ENCODE measurements at regions of chr20 and their contacts with region 1.

Region 1: GRCh38 chr20:32406701-32407100 is 48.6 kb downstream of the ASXL1 start:
- DNase-seq: no peak
- H3K4me3 Mint-ChIP-seq: no peak overlapping the region
- H3K27ac Mint-ChIP-seq: no peak overlapping the region
- H3K4me1 Mint-ChIP-seq: peaks cover 35% of the 10 kb centered on the region
- H3K27me3 Mint-ChIP-seq: no peaks in the 10 kb centered on the region

Region 2: DNA sequence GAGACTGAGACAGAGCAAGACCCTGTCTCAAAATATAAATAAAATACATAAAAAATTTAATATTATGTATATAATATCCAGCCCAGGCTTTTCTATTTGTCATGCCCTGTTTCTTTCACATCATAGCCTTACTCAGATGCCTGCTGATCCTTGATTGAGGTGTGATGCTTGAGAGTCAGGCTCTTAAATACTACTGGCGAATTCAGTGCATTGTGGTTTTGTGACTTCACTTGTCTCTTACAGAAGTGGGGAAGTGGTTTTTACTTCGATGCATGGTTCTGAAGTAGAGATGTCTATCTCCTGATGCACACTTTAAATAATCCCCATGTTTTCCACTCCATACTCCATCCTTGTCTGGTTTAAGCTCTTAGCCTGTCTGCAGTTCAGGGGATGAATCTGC is 19.4 kb before region 1 on chr20:
- intact Hi-C with region 1: loop called (anchors 2 kb)
- DNase-seq: peak; percentile 55
- H3K4me3 Mint-ChIP-seq: no peak overlapping the region
- H3K27ac Mint-ChIP-seq: peak overlapping the region; percentile 59
- H3K4me1 Mint-ChIP-seq: peaks cover 68% of the 10 kb centered on the region
- H3K27me3 Mint-ChIP-seq: no peaks in the 10 kb centered on the region

Region 3: DNA sequence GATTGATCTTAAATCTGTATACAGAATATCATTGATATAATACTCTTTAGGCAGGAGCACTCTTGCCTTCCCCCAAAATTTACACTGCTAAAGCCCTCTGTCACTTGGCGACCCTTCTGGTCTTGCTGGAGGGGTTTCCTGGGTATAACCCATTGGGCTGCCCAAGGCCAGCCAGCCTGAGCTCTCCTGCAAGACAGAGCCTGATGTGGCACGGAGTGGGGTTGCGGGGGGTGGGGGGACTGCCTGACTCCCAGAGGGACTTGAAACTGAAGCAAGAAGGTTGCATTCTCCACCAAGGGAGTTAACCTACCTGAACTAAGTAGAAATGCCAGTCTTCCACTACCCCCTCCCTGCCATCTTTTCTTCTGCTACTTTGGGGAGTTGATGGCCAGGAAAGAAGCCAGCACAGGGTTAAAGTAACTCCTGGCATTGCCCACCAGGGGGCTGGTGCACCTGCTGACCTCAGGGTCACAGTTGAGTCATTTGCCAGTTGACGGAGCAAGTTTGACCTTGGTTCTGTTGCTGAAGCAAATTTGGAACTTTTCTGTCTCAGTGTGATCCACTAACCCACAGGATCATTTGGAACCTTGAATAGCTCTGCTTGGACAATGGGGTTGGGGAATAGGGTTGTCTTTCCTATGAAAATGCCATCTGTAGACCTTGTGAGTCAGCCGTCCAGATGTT is 30.8 kb after region 1 on chr20:
- intact Hi-C with region 1: loop called (anchors 1 kb)
- DNase-seq: no peak
- H3K4me3 Mint-ChIP-seq: no peak overlapping the region
- H3K27ac Mint-ChIP-seq: no peak overlapping the region
- H3K4me1 Mint-ChIP-seq: peaks cover 14% of the 10 kb centered on the region
- H3K27me3 Mint-ChIP-seq: no peaks in the 10 kb centered on the region

Measured in activated T-helper 1 cell treated with anti-CD3 and anti-CD28 coated beads, Interleukin-12 subunit alpha, Interleukin-12 subunit beta, Interleukin-2, Interleukin-4 antibody, amounts not matched to agents 30 ng/mL and 10 ng/mL and 1 ng/mL, durations not matched to agents 14 hours and 24 hours and 36 hours (primary cell).